Common myeloid progenitor, CD34-positive (primary cell): ENCODE measurements at regions of chr6 and their contacts with region 1.

Region 1: DNA sequence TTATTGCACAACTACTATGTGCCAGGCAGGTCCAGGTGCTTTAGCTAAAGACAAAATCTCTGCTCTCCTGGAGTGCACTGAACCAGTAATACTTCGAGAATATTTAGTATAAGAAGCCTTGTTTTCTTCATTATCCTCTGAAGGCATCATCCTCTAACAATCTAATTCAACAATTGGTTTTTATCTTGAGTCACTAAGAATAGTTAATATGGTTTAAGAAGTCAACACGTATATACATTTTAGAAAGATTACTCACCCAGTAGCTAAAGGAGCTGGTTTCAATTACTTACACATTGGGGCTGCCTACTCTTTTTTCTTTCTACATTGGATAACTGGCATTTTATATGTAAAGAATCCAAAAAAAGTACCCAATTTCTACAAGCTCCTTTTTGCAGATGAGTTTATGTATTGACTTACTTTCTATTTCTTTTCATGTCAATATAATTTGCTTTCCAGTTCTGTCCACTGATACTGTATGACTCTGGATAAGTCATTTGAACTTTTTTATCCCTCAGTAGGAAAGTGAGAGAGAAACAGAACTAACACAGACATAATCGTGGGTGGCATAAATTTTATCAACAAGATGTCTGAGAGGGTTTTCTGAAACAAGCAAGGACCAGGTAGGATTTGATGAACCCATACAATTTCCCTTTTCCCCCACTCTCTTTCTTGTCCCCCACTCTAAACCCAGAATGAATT is 312.5 kb downstream of the CLIC5 start:
- DNase-seq: no peak
- H3K4me3 ChIP-seq: no peak overlapping the region
- H3K27ac ChIP-seq: no peak overlapping the region
- H3K4me1 ChIP-seq: peaks cover 0 to 17% (median 6%) of the 10 kb centered on the region in 4 experiments
- H3K27me3 ChIP-seq: no peaks in the 10 kb centered on the region

Region 2: GRCh38 chr6:45714741-45715507 is 11.7 kb after region 1 on chr6:
- CTCF ChIA-PET with region 1: interaction called, 18 read pairs
- POLR2A ChIA-PET with region 1: no interaction called
- DNase-seq: peak; percentile 81 to 86 (median 84)
- H3K4me3 ChIP-seq: no peak overlapping the region
- H3K27ac ChIP-seq: no peak overlapping the region
- H3K4me1 ChIP-seq: peaks cover 0 to 50% (median 20%) of the 10 kb centered on the region in 4 experiments
- H3K27me3 ChIP-seq: no peaks in the 10 kb centered on the region